Heart left ventricle (tissue), 16 donors: ENCODE measurements at regions of chr1 and their contacts with region 1.

Region 1: GRCh38 chr1:231806623-231807495 is 180.3 kb downstream of the DISC1 start:
- DNase-seq: peak; percentile 38 to 77 (median 54)
- ATAC-seq: peak; percentile 64 to 83 (median 74)
- H3K4me3 ChIP-seq: no peak overlapping the region
- H3K27ac ChIP-seq: no peak overlapping the region
- H3K4me1 ChIP-seq: peaks cover 0 to 27% (median 8%) of the 10 kb centered on the region in 12 donors
- H3K27me3 ChIP-seq: no peaks in the 10 kb centered on the region
- CTCF ChIP-seq: peak; percentile 36 to 61 (median 52)
- POLR2A ChIP-seq: no peak

Region 2: GRCh38 chr1:231636157-231636556 is 170.7 kb before region 1 on chr1:
- intact Hi-C with region 1: loop called in 1 of 10 experiments (anchors 10 kb)
- DNase-seq: peak in 1 of 5 donors; percentile 39
- ATAC-seq: peak in 3 of 4 donors; percentile 16 to 74 (median 53)
- H3K4me3 ChIP-seq: no peak overlapping the region
- H3K27ac ChIP-seq: no peak overlapping the region
- H3K4me1 ChIP-seq: peaks cover 0 to 4% (median 0%) of the 10 kb centered on the region in 12 donors
- H3K27me3 ChIP-seq: no peaks in the 10 kb centered on the region
- CTCF ChIP-seq: no peak
- POLR2A ChIP-seq: no peak

Region 3: GRCh38 chr1:231763456-231763855 is 43.4 kb before region 1 on chr1:
- intact Hi-C with region 1: loop called in 5 of 10 experiments (anchors 5 to 10 kb)
- DNase-seq: no peak
- ATAC-seq: no peak
- H3K4me3 ChIP-seq: no peak overlapping the region
- H3K27ac ChIP-seq: no peak overlapping the region
- H3K4me1 ChIP-seq: no peaks in the 10 kb centered on the region
- H3K27me3 ChIP-seq: no peaks in the 10 kb centered on the region
- CTCF ChIP-seq: no peak
- POLR2A ChIP-seq: no peak

Region 4: DNA sequence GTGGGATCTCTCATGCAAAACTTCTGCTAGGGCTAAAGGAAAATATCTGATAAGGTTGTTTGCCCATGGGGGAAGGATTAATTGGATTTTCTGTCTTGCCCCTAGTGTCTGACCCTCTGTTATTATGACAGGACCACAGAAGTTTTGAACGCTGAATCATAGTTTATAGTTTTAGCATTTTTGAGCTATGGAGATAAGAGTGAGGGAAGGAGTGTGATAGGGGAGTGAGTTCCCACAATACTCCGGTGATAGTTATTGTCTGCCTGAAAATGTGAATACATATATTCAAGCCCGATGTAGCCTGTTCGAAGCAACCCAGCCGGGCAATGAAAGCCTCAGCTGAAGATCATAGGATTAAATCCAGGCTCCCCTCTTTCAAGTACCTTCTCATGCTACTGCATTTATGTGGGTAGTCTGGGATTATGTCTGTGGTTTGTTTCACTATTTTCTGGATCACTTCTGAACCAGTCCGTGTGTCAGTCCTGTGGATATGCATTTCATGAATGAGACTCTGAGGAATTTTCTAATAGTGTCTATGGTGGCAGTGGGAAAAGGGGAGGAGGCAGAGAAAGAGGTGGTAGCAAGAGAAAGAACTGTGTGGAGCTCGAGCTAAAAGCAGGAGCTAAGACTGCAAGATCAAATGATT is 78.5 kb after region 1 on chr1:
- intact Hi-C with region 1: no loop called
- DNase-seq: no peak
- ATAC-seq: peak in 1 of 4 donors; percentile 65
- H3K4me3 ChIP-seq: no peak overlapping the region
- H3K27ac ChIP-seq: no peak overlapping the region
- H3K4me1 ChIP-seq: peaks cover 0 to 9% (median 0%) of the 10 kb centered on the region in 12 donors
- H3K27me3 ChIP-seq: no peaks in the 10 kb centered on the region
- CTCF ChIP-seq: no peak
- POLR2A ChIP-seq: no peak